GM13976 (cell line): ENCODE measurements at regions of chr22 and their contacts with region 1.

Region 1: GRCh38 chr22:19179497-19180225 is 1.1 kb upstream of the SLC25A1 start:
- DNase-seq: peak; percentile 88
- CTCF ChIP-seq: peak; percentile 65

Region 2: GRCh38 chr22:19240813-19241592 is 61.3 kb after region 1 on chr22:
- in situ Hi-C with region 1: loop called (anchors 10 kb)
- DNase-seq: no peak
- CTCF ChIP-seq: no peak

Region 3: DNA sequence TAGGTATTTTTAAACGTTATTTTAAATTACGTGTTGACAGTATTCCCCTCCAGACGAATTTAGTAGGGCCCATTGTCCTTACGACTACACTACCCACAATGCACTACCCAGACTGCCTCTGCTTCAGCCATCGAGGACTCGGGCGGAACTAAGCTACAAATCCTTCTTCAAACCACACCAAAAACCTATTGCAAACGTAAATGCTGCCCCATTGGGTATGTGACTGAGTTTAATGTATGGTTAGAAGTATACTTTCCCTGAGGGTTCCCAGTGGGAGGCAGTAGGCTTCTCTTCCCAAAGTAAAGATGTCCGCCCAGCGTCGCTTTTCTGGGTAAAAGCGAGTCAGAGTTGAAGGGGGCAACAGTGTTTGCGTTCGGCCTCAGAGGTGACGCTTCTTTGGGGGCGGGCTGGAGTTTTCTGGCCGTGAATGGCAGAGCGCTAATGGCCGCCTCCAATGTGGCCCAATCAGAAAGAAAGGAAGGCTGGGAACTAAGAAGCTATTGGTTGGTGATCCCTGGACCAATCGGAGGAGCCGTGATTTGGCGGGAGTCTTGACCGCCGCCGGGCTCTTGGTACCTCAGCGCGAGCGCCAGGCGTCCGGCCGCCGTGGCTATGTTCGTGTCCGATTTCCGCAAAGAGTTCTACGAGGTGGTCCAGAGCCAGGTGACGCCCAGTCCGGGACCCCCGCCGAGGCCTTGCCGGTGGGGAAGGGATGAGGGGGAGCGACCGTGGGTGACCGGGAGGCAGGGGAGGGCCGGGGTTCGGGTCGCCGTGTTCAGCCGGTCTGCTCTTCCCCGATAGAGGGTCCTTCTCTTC is 299.9 kb after region 1 on chr22 and contains the start of gene CDC45:
- in situ Hi-C with region 1: loop called (anchors 10 kb)
- DNase-seq: peak; percentile 97
- CTCF ChIP-seq: no peak